Transverse colon (tissue), 4 donors: ENCODE measurements at regions of chr17 and their contacts with region 1.

Region 1: GRCh38 chr17:71910002-71910401 is 210.8 kb upstream of the SOX9 start:
- DNase-seq: no peak
- H3K4me3 ChIP-seq: no peak overlapping the region
- H3K27ac ChIP-seq: no peak overlapping the region
- H3K4me1 ChIP-seq: no peaks in the 10 kb centered on the region
- H3K27me3 ChIP-seq: no peaks in the 10 kb centered on the region
- CTCF ChIP-seq: no peak
- EP300 ChIP-seq: no peak
- POLR2A ChIP-seq: no peak

Region 2: DNA sequence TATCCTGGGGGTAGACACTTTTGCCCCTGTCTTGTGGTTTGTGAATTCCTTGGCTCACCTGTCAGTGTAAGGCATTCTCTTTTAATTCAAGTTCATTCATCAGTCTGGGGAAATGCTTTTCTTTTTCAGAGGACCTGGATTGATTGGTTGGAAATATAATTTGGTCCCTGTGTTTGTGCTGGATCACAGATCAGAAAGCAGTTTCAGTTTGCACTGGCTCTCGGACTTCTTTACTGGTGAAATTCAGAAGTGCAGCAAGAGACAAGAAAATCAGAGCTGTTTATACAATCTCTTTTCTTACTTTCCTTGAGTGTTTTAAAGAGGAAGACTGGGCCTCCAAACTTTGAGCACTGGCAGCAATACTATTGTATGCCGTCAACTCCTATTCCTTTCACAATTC is 1996.8 kb before region 1 on chr17:
- in situ Hi-C with region 1: no loop called
- intact Hi-C with region 1: loop called (anchors 5 kb)
- DNase-seq: no peak
- H3K4me3 ChIP-seq: no peak overlapping the region
- H3K27ac ChIP-seq: no peak overlapping the region
- H3K4me1 ChIP-seq: no peaks in the 10 kb centered on the region
- H3K27me3 ChIP-seq: no peaks in the 10 kb centered on the region
- CTCF ChIP-seq: no peak
- EP300 ChIP-seq: no peak
- POLR2A ChIP-seq: no peak

Region 3: GRCh38 chr17:71959154-71959553 is 49.2 kb after region 1 on chr17:
- in situ Hi-C with region 1: no loop called
- intact Hi-C with region 1: no loop called
- DNase-seq: no peak
- H3K4me3 ChIP-seq: no peak overlapping the region
- H3K27ac ChIP-seq: no peak overlapping the region
- H3K4me1 ChIP-seq: no peaks in the 10 kb centered on the region
- H3K27me3 ChIP-seq: no peaks in the 10 kb centered on the region
- CTCF ChIP-seq: peak; percentile 27 to 51 (median 45)
- EP300 ChIP-seq: no peak
- POLR2A ChIP-seq: no peak